ENCODE measurements at regions of chr2 and their contacts with region 1.

Region 1: GRCh38 chr2:69973335-69973735 is 11.9 kb upstream of the ASPRV1 start:
- DNase-seq: no peak
- H3K4me3 ChIP-seq: no peak overlapping the region
- H3K4me3 Mint-ChIP-seq: no peak overlapping the region
- H3K27ac ChIP-seq: no peak overlapping the region
- H3K27ac Mint-ChIP-seq: no peak overlapping the region
- H3K4me1 ChIP-seq: peaks cover 29 to 33% of the 10 kb centered on the region in 2 donors
- H3K4me1 Mint-ChIP-seq: peaks cover 34% of the 10 kb centered on the region
- H3K27me3 ChIP-seq: no peaks in the 10 kb centered on the region
- H3K27me3 Mint-ChIP-seq: peaks cover 1 to 4% (median 4%) of the 10 kb centered on the region in 3 donors
- CTCF ChIP-seq: no peak

Region 2: GRCh38 chr2:69911985-69912563 is 61.3 kb before region 1 on chr2:
- intact Hi-C with region 1: no loop called
- DNase-seq: peak; percentile 50 to 67 (median 67)
- H3K4me3 ChIP-seq: no peak overlapping the region
- H3K4me3 Mint-ChIP-seq: no peak overlapping the region
- H3K27ac ChIP-seq: peak overlapping the region in 1 of 2 donors; percentile 15
- H3K27ac Mint-ChIP-seq: peak overlapping the region in 3 of 7 donors; percentile 37 to 76 (median 71)
- H3K4me1 ChIP-seq: peaks cover 19 to 26% of the 10 kb centered on the region in 2 donors
- H3K4me1 Mint-ChIP-seq: peaks cover 12% of the 10 kb centered on the region
- H3K27me3 ChIP-seq: no peaks in the 10 kb centered on the region
- H3K27me3 Mint-ChIP-seq: no peaks in the 10 kb centered on the region
- CTCF ChIP-seq: peak; percentile 81

Region 3: DNA sequence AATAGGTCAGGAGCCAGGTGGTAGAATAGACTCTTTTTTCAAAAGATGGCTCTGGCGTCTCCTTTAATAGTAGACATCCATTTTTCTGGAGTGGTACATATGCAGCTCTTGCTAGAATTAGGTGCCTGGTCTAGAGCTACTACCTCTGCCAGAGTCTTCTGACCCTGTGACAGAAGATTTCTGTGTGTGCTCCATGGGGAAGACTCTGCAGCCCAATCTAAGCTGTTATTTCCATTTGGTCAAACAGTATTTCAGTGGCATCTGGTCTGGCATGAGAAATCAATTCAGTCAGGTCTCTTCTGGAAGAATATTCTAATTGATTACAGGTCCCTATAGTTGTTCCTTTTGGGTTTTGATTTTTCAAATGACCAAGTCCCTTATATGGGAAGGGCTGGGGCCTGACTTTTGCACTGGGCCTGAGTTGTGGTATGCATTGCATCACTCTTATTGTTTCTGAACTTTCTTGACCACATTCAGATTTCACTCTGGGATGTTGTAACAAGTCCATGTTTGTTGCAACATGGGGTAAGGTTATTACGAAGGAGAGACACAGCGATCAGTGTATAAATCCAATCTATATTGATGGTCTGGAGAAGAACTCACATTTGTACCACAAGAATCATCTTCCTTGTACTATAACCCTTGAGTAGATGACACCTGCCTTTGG is 46.4 kb before region 1 on chr2:
- intact Hi-C with region 1: loop called in 1 of 2 experiments (anchors 10 kb)
- DNase-seq: peak; percentile 81 to 90 (median 89)
- H3K4me3 ChIP-seq: peak overlapping the region in 1 of 3 experiments; percentile 50
- H3K4me3 Mint-ChIP-seq: peak overlapping the region in 1 of 2 donors; percentile 42
- H3K27ac ChIP-seq: peak overlapping the region; percentile 33 to 82
- H3K27ac Mint-ChIP-seq: peak overlapping the region; percentile 77 to 92 (median 86)
- H3K4me1 ChIP-seq: peaks cover 36 to 76% of the 10 kb centered on the region in 2 donors
- H3K4me1 Mint-ChIP-seq: peaks cover 76% of the 10 kb centered on the region
- H3K27me3 ChIP-seq: no peaks in the 10 kb centered on the region
- H3K27me3 Mint-ChIP-seq: no peaks in the 10 kb centered on the region
- CTCF ChIP-seq: no peak

Region 4: DNA sequence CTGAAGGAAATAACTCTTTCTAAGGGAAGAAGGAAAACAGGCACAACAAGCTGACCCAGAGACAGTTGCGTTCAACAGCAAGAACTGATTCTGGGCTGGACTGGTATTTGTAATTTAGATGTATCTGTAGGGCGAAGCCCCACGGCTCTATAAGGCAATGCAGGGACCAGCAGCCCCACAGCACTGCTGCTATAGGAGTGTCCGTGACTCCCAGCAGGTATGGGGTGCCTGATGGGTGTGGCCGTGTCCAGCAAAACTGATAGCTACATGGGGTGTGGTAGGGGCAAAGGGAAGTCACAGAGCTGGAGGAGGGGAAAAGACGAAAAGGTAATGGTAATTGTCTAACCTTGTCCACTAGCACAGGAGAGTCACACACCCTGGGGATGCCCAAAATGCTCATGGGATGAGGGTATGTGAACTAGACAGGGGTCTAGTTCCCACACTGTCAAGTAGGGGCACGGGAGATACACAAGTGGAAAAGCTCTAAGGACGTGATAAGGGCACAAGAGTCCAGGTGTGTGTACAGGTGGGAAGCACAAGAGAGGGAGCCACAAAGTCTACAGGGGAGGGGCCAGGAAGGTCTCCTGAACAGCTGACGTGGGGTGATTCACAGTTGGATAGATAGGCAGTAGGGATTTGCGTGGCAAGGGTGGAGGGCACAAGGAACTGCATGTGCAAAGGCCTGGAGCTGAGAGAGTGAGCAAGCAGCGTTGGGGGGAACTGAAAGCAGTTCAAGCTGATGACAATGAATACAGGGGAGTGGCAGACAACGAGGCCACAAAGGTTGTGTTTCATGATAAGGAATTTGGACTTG is 36.6 kb after region 1 on chr2:
- intact Hi-C with region 1: loop called in 1 of 2 experiments (anchors 5 kb)
- DNase-seq: peak; percentile 87 to 96 (median 90)
- H3K4me3 ChIP-seq: no peak overlapping the region
- H3K4me3 Mint-ChIP-seq: peak overlapping the region; percentile 31 to 67
- H3K27ac ChIP-seq: peak overlapping the region; percentile 61 to 86
- H3K27ac Mint-ChIP-seq: peak overlapping the region; percentile 84 to 98 (median 94)
- H3K4me1 ChIP-seq: peaks cover 22 to 25% of the 10 kb centered on the region in 2 donors
- H3K4me1 Mint-ChIP-seq: peaks cover 28% of the 10 kb centered on the region
- H3K27me3 ChIP-seq: no peaks in the 10 kb centered on the region
- H3K27me3 Mint-ChIP-seq: peaks cover 0 to 2% (median 0%) of the 10 kb centered on the region in 3 donors
- CTCF ChIP-seq: no peak

Measured in CD14-positive monocyte (primary cell).